PC-9 (cell line): ENCODE measurements at regions of chr15 and their contacts with region 1.

Region 1: DNA sequence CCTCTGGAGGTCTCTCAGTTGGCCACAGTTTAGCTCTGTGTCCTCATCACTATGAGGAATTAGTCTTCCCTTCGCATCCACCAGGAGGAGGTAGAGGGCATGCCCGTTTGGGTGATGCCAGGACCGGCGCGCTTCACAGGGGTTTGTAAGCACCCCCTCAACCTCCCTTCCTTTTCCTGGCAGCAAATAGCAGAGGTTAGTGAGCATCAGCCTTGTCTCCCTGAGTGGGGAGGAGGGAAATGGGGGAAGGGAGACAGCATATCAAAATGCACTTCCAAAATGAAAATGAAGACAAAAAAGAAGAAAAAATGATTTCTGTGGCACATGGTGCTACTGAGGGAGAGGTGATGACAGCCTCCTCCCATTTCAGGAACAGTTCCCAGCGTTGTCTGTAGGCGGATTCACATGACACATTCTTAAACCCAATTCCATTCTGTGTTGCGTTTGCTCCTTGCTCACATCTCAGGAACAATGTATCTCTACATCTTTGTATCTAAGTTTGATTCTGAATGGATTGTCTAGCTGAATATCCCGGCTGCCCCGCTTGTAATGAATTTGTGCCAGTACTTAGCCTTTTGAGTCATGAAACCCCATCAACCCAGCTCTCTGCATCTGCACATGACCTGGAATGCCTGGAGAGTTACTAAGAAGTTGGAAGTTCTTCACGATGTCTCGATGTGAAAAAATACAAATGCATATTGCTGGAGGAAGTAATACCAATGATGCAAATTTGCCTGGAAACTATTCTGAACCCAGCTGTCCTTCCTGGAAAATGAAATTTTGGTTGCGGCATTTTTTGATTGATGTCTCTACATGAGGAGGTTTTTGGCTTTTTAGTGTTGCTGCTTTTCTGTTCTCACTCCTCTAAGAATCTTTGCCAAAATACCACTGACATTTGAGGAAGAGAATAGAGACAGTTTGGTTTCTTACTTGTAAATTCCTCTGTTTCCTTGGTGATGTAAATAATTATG is 45.2 kb downstream of the TYRO3 start:
- DNase-seq: peak; percentile 44 to 45
- H3K4me3 ChIP-seq: peak overlapping the region; percentile 54
- H3K27ac ChIP-seq: no peak overlapping the region
- H3K4me1 ChIP-seq: peaks cover 7% of the 10 kb centered on the region; the same call in 1 of the 2 replicates
- H3K27me3 ChIP-seq: no peaks in the 10 kb centered on the region
- CTCF ChIP-seq: peak; percentile 80

Region 2: DNA sequence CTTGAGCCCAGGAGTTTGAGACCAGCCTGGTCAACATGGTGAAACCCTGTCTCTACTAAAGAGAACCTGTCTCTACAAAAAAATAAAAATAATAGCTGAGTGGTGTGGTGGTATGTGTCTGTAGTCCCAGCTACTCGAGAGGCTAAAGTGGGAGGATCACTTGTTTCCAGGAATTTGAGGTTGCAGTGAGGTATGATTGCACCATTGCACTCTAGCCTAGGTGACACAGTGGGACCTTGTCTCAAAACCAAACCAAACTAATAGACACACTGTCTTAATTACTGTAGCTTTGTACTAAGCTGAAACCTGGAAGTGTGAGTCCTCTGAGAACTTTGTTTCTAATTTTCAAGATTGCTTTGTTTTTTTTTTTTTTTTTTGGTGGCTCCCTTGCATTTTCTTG is 86.4 kb after region 1 on chr15:
- CTCF ChIA-PET with region 1: interaction called, 10 read pairs
- POLR2A ChIA-PET with region 1: no interaction called
- intact Hi-C with region 1: no loop called
- DNase-seq: no peak
- H3K4me3 ChIP-seq: no peak overlapping the region
- H3K27ac ChIP-seq: no peak overlapping the region
- H3K4me1 ChIP-seq: no peaks in the 10 kb centered on the region
- H3K27me3 ChIP-seq: no peaks in the 10 kb centered on the region
- CTCF ChIP-seq: no peak

Region 3: DNA sequence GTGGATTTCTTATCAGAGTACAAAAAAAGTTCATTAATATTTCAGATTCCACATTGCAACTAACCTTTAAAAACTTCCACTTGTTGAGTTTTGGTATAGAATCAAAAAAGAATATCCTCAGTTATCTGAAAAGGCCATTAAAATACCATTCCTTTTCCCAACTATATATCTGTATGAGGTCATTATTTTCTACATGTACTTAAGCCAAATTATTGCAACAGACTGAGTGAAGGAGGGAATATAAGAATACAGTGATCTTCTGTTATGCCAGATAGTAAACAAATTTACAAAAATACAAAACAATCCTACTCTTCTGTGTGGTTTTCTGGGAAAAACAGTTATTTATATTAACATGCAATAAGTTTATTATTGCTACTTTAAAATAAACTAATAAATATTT is 663.1 kb after region 1 on chr15:
- CTCF ChIA-PET with region 1: no interaction called
- POLR2A ChIA-PET with region 1: no interaction called
- intact Hi-C with region 1: no loop called
- DNase-seq: no peak
- H3K4me3 ChIP-seq: no peak overlapping the region
- H3K27ac ChIP-seq: no peak overlapping the region
- H3K4me1 ChIP-seq: peaks cover 12% of the 10 kb centered on the region; the same call in 1 of the 2 replicates
- H3K27me3 ChIP-seq: no peaks in the 10 kb centered on the region
- CTCF ChIP-seq: no peak